Naive thymus-derived CD8-positive, alpha-beta T cell (primary cell): ENCODE measurements at regions of chr7 and their contacts with region 1.

Region 1: GRCh38 chr7:26112203-26112740 is 39.7 kb upstream of the NFE2L3 start:
- DNase-seq: peak in 1 of 10 donors; percentile 40
- ATAC-seq: peak; percentile 47 to 57
- H3K4me3 Mint-ChIP-seq: no peak overlapping the region
- H3K27ac Mint-ChIP-seq: no peak overlapping the region
- H3K4me1 Mint-ChIP-seq: peaks cover 3 to 19% (median 8%) of the 10 kb centered on the region in 4 donors
- H3K27me3 Mint-ChIP-seq: peaks cover 0 to 1% (median 0%) of the 10 kb centered on the region in 5 donors

Region 2: GRCh38 chr7:26101361-26102151 is 10.7 kb before region 1 on chr7:
- POLR2A ChIA-PET with region 1: interaction called, 17 read pairs
- DNase-seq: peak in 1 of 10 donors; percentile 20
- ATAC-seq: peak; percentile 46 to 56
- H3K4me3 Mint-ChIP-seq: peak overlapping the region in 9 of 10 donors; percentile 70 to 88 (median 76)
- H3K27ac Mint-ChIP-seq: peak overlapping the region in 9 of 10 donors; percentile 18 to 94 (median 87)
- H3K4me1 Mint-ChIP-seq: peaks cover 14 to 60% (median 42%) of the 10 kb centered on the region in 4 donors
- H3K27me3 Mint-ChIP-seq: no peaks in the 10 kb centered on the region